ENCODE measurements at regions of chr2 and their contacts with region 1.

Region 1: GRCh38 chr2:120223034-120223912 is at the start of gene TMEM185B:
- DNase-seq: peak; percentile 80 to 95 (median 88)
- ATAC-seq: peak; percentile 95
- H3K4me3 ChIP-seq: peak within 1 kb of the TSS; percentile 72
- H3K4me3 Mint-ChIP-seq: peak within 1 kb of the TSS; percentile 87
- H3K27ac ChIP-seq: peak within 1 kb of the TSS; percentile 80 to 85
- H3K27ac Mint-ChIP-seq: peak within 1 kb of the TSS; percentile 87
- H3K4me1 ChIP-seq: peaks cover 37% of the 10 kb centered on the region
- H3K4me1 Mint-ChIP-seq: peaks cover 55% of the 10 kb centered on the region
- H3K27me3 ChIP-seq: no peaks in the 10 kb centered on the region
- H3K27me3 Mint-ChIP-seq: no peaks in the 10 kb centered on the region
- CTCF ChIP-seq: no peak
- total RNA-seq, gene TMEM185B: 17.7 to 19.0 TPM

Region 2: DNA sequence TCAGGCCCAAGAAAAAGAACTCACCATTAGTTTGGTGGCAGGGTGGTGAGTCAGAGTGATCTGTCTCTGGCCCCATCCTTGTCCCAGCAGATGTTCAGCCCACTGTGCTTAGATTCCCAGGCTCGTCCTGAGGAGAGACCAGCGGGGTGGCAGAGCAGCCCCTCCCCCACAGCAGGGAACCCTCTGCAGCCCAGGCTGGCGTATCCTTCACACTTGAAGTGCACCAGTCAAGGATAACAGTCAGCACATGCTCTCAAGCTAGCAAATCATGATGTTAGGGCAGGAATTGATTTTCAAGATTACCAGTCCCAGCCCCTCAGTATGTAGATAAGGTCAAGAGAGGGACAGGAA is 43.2 kb before region 1 on chr2:
- CTCF ChIA-PET with region 1: interaction called, 3 read pairs
- POLR2A ChIA-PET with region 1: interaction called, 19 read pairs
- intact Hi-C with region 1: loop called in 1 of 2 experiments (anchors 2 kb)
- DNase-seq: no peak
- ATAC-seq: no peak
- H3K4me3 ChIP-seq: no peak overlapping the region
- H3K4me3 Mint-ChIP-seq: no peak overlapping the region
- H3K27ac ChIP-seq: no peak overlapping the region
- H3K27ac Mint-ChIP-seq: peak overlapping the region; percentile 66
- H3K4me1 ChIP-seq: peaks cover 55% of the 10 kb centered on the region
- H3K4me1 Mint-ChIP-seq: peaks cover 77% of the 10 kb centered on the region
- H3K27me3 ChIP-seq: no peaks in the 10 kb centered on the region
- H3K27me3 Mint-ChIP-seq: no peaks in the 10 kb centered on the region
- CTCF ChIP-seq: no peak

Region 3: DNA sequence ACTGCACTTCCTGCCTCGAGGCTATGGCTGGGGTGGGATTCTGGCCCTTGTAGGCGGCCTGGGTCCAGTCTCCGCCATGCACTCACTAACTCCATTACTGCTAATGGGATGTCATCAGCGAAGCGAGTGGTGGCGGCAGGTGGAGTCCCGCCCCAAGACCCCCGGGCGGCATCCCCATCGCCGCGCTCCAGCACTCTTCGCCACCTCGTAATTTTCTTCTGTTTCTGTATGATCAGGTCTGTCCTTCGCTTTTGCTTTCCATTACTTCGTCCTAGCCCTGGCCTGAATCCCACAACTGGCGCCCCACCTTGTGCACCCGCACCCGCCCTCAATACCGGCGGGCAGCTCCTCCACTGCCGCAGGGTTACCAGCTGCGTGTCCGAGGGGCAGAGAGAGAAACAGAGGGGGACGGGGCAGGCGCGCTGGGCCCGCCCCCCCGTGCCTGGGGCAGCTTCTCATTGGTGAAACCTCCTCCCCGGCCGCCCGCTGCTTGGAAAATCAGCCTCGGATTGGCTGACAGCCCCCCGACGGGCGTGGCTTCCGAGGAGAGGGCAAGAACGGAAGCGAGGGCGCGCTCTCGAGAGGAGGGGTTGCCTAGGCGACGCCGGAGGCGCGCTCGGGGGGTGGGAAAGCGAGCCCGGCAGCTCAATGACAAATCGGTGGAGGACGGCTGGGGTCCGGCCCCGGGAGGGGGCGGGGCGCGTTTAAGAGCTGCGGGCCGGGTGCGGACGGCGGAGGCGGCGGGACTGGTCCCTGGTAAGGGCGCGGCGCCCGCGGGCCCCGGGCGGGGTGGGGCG is 29.1 kb after region 1 on chr2 and contains the start of gene RALB:
- CTCF ChIA-PET with region 1: no interaction called
- POLR2A ChIA-PET with region 1: interaction called, 26 read pairs
- intact Hi-C with region 1: loop called (anchors 1 kb)
- DNase-seq: peak; percentile 95 to 99 (median 98)
- ATAC-seq: peak; percentile 95
- H3K4me3 ChIP-seq: peak within 1 kb of the TSS; percentile 83
- H3K4me3 Mint-ChIP-seq: peak within 1 kb of the TSS; percentile 97
- H3K27ac ChIP-seq: peak within 1 kb of the TSS; percentile 35 to 76
- H3K27ac Mint-ChIP-seq: peak within 1 kb of the TSS; percentile 87
- H3K4me1 ChIP-seq: peaks cover 20% of the 10 kb centered on the region
- H3K4me1 Mint-ChIP-seq: peaks cover 50% of the 10 kb centered on the region
- H3K27me3 ChIP-seq: peaks cover 0 to 3% of the 10 kb centered on the region in 2 experiments
- H3K27me3 Mint-ChIP-seq: peaks cover 8% of the 10 kb centered on the region
- CTCF ChIP-seq: no peak
- total RNA-seq, gene RALB: 3.1 to 3.6 TPM

Region 4: DNA sequence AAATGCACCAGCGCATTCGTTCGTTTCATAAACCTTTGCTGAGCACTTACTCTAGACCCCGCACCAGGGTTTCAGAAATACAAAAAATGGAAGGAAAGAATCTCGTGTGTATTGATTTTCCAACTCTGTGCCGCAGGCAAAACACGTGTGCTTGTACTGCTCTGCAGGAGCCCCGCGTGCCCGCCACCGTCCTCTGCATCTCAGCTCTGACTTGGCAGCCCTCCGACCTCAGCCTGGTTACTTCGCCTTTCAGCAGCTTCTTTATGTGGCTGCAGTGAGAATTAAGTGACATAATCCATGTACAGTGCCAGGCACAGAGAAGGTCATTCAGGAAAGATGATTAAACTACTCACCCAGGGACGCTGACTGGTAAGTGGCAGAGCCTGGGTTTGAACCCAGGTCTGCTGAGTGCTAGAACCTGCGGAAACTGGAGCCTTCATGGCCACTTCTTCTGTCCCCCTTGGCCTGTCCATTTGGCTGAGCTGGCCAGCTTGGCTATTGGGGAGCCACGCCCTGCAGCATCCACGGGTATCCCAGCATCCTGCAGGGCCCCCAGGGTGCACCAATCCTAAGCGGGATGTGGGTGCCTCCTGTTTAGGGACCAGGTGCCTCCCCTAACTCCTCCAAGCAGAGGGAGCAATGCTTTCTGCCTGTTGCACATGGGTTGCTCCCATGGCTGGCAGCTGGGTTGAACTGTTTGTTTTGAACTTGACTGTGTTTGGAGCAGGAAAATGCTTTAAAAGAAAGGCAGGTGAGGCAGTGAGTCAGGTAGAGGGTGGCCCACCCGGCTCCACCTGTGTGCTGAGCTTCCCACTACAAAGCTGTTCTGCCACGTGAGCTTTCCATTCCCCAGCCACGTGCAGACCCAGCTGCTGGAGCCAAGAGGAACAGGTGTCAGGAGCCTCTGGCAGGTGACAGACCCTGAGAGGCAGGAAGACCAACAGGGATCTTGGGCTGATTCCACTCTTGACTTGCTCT is 156.9 kb after region 1 on chr2:
- CTCF ChIA-PET with region 1: no interaction called
- POLR2A ChIA-PET with region 1: no interaction called
- intact Hi-C with region 1: no loop called
- DNase-seq: no peak
- ATAC-seq: no peak
- H3K4me3 ChIP-seq: no peak overlapping the region
- H3K4me3 Mint-ChIP-seq: no peak overlapping the region
- H3K27ac ChIP-seq: no peak overlapping the region
- H3K27ac Mint-ChIP-seq: no peak overlapping the region
- H3K4me1 ChIP-seq: no peaks in the 10 kb centered on the region
- H3K4me1 Mint-ChIP-seq: no peaks in the 10 kb centered on the region
- H3K27me3 ChIP-seq: peaks cover 0 to 2% of the 10 kb centered on the region in 2 experiments
- H3K27me3 Mint-ChIP-seq: peaks cover 13% of the 10 kb centered on the region
- CTCF ChIP-seq: no peak